HCT116 (cell line): ENCODE measurements at regions of chr9 and their contacts with region 1.

Region 1: GRCh38 chr9:78369639-78370219 is 72.8 kb downstream of the PSAT1 start:
- DNase-seq: peak; percentile 52
- ATAC-seq: peak; percentile 97
- H3K4me3 ChIP-seq: no peak overlapping the region
- H3K27ac ChIP-seq: no peak overlapping the region
- H3K4me1 ChIP-seq: peaks cover 0 to 8% of the 10 kb centered on the region in 2 experiments; a peak in 1 of 4 replicates
- H3K27me3 ChIP-seq: peaks cover 15% of the 10 kb centered on the region; the same call in 1 of the 2 replicates
- CTCF ChIP-seq: peak; percentile 56 to 96 (median 93)
- POLR2A ChIP-seq: no peak
- RAD21 ChIP-seq: peak; percentile 74

Region 2: DNA sequence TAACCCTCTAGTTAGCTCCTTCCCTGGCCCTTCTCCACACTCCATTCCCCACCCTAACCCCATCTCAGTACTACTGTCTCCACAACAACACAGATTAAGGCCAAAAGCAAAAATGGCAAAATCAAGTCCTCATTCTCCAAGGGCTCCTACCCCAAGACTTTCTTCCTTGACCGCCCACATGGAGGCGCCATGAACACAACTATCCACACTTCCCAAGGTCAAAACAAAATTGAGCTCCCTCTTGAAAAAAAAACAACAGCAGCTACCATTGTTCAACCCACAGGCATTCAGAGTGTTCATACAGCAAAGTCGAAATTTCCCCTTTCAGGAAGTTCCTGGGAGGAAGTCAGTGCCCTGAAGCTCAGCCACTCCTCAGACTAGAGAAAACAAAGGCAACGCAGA is 392.5 kb before region 1 on chr9:
- CTCF ChIA-PET with region 1: interaction called, 4 read pairs
- POLR2A ChIA-PET with region 1: no interaction called
- RAD21 ChIA-PET with region 1: no interaction called
- intact Hi-C with region 1: loop called (anchors 10 kb)
- DNase-seq: peak; percentile 21
- ATAC-seq: peak; percentile 77
- H3K4me3 ChIP-seq: no peak overlapping the region
- H3K27ac ChIP-seq: no peak overlapping the region
- H3K4me1 ChIP-seq: peaks cover 6 to 8% of the 10 kb centered on the region in 2 experiments
- H3K27me3 ChIP-seq: no peaks in the 10 kb centered on the region
- CTCF ChIP-seq: peak; percentile 50 to 61 (median 60); a peak in 5 of 6 replicates
- POLR2A ChIP-seq: no peak
- RAD21 ChIP-seq: peak; percentile 61

Region 3: DNA sequence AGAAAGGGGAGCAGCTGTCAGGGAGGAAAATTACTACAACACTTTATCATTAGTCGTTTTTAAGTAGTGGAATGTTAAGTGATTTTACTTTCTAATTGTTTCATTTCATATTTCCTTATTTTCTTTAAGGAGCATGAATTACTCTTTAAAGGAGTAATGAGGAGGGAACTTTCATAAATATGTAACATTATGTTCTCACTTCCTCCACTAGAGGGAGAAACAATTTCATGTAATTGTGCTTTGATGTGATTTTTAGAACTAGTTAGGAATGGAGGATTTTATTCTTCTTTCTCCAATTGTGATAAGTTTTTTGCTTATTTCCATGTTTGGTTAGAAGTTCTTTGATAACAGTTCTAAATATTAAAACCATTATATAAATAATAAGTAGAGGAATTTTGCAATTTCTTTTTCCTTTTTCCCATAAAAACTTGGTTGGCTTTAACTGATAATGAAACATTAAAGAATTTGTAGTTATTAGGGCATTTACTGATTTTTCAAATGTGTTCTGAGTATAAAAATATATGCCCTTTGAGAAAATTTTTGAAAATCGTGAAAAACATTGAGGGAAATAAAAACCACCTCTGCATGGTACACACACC is 108.2 kb before region 1 on chr9:
- CTCF ChIA-PET with region 1: no interaction called
- POLR2A ChIA-PET with region 1: no interaction called
- RAD21 ChIA-PET with region 1: no interaction called
- intact Hi-C with region 1: loop called (anchors 1 kb)
- DNase-seq: peak; percentile 8
- ATAC-seq: no peak; the same call in 1 of the 2 replicates
- H3K4me3 ChIP-seq: no peak overlapping the region
- H3K27ac ChIP-seq: no peak overlapping the region
- H3K4me1 ChIP-seq: no peaks in the 10 kb centered on the region
- H3K27me3 ChIP-seq: no peaks in the 10 kb centered on the region
- CTCF ChIP-seq: peak; percentile 41 to 79 (median 47)
- POLR2A ChIP-seq: no peak
- RAD21 ChIP-seq: peak; percentile 52

Region 4: GRCh38 chr9:78468231-78468630 is 98.5 kb after region 1 on chr9:
- CTCF ChIA-PET with region 1: no interaction called
- POLR2A ChIA-PET with region 1: no interaction called
- RAD21 ChIA-PET with region 1: no interaction called
- intact Hi-C with region 1: no loop called
- DNase-seq: no peak
- ATAC-seq: no peak
- H3K4me3 ChIP-seq: no peak overlapping the region
- H3K27ac ChIP-seq: no peak overlapping the region
- H3K4me1 ChIP-seq: no peaks in the 10 kb centered on the region
- H3K27me3 ChIP-seq: no peaks in the 10 kb centered on the region
- CTCF ChIP-seq: no peak
- POLR2A ChIP-seq: no peak
- RAD21 ChIP-seq: no peak